ENCODE measurements at regions of chr22 and their contacts with region 1.

Region 1: DNA sequence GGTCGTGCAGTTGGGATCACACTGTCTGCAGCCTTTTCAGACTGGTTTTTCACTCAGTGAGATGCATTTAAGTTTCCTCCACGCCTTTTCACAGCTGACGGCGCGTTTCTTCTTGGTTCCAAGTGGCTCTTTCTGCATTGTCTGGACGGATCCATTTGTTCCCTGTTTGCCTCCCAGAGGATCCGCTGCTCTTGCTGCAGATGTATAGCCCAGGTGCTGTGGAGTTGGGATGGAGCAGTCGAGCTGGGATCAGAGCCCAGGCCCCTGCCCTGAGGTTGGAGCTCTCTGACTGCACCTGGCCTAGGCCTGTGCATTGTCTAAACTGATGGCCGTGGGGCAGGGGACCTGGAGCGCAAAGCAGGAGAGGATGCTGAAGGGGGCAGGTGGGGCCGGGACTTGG is 51.6 kb downstream of the PARVB start:
- DNase-seq: no peak
- H3K4me3 ChIP-seq: no peak overlapping the region
- H3K27ac ChIP-seq: no peak overlapping the region
- H3K4me1 ChIP-seq: peaks cover 0 to 7% (median 0%) of the 10 kb centered on the region in 3 donors
- H3K27me3 ChIP-seq: no peaks in the 10 kb centered on the region
- CTCF ChIP-seq: no peak
- POLR2A ChIP-seq: no peak

Region 2: GRCh38 chr22:44003405-44004103 is 72.1 kb before region 1 on chr22:
- intact Hi-C with region 1: no loop called
- DNase-seq: no peak
- H3K4me3 ChIP-seq: no peak overlapping the region
- H3K27ac ChIP-seq: no peak overlapping the region
- H3K4me1 ChIP-seq: no peaks in the 10 kb centered on the region
- H3K27me3 ChIP-seq: no peaks in the 10 kb centered on the region
- CTCF ChIP-seq: no peak
- POLR2A ChIP-seq: no peak

Region 3: DNA sequence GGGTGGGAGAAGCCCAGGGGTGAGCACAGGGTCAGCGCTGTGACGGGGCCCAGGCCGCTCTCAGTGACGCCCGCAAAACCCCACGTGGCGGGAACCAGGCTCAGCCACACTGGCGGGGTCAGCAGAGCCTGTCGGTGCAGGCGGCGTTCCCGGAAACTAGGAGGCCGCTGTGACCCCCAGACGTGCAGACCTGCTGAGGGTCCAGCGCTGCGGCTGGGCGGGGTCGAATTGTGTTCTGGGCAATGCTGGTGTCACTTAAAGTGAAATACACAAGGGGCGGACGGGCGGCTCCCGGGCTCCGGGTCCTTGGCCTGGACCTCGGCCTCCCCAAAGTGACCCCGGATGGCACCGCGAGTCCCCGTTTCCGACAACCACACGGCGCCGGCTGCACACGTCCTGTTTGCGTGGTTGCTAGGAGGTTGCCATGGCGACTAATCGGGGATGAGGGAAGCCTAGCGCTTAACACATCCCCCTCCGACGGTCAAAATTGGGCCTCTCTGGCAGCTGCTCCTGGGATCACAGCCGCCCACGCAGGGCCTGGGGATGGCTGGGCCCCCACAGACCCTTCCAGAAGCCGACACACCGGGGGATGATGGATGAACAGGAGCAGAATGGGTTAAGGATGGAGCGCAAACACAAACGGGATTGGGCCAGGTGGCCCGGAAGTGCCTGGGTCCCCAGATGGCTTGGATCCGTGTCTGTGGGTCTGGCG is 544.6 kb after region 1 on chr22:
- intact Hi-C with region 1: loop called (anchors 5 kb)
- DNase-seq: no peak
- H3K4me3 ChIP-seq: peak overlapping the region in 1 of 4 donors; percentile 35
- H3K27ac ChIP-seq: peak overlapping the region in 2 of 4 donors; percentile 14 to 50
- H3K4me1 ChIP-seq: peaks cover 5 to 15% (median 9%) of the 10 kb centered on the region in 3 donors
- H3K27me3 ChIP-seq: peaks cover 0 to 60% (median 4%) of the 10 kb centered on the region in 4 donors
- CTCF ChIP-seq: no peak
- POLR2A ChIP-seq: no peak